CD4-positive, alpha-beta memory T cell (primary cell): ENCODE measurements at regions of chr20 and their contacts with region 1.

Region 1: GRCh38 chr20:4091490-4092479 is 76.4 kb upstream of the RNF24 start:
- DNase-seq: peak in 4 of 5 donors; percentile 18 to 28 (median 26)
- H3K4me3 ChIP-seq: no peak overlapping the region
- H3K4me3 Mint-ChIP-seq: no peak overlapping the region
- H3K27ac ChIP-seq: no peak overlapping the region
- H3K27ac Mint-ChIP-seq: no peak overlapping the region
- H3K4me1 ChIP-seq: no peaks in the 10 kb centered on the region
- H3K4me1 Mint-ChIP-seq: peaks cover 0 to 4% (median 3%) of the 10 kb centered on the region in 4 donors
- H3K27me3 ChIP-seq: no peaks in the 10 kb centered on the region
- H3K27me3 Mint-ChIP-seq: peaks cover 5 to 9% of the 10 kb centered on the region in 2 donors

Region 2: GRCh38 chr20:3679749-3680700 is 411.8 kb before region 1 on chr20:
- CTCF ChIA-PET with region 1: interaction called, 6 read pairs
- POLR2A ChIA-PET with region 1: no interaction called
- intact Hi-C with region 1: loop called (anchors 2 kb)
- DNase-seq: no peak
- H3K4me3 ChIP-seq: no peak overlapping the region
- H3K4me3 Mint-ChIP-seq: peak overlapping the region in 1 of 8 donors; percentile 31
- H3K27ac ChIP-seq: no peak overlapping the region
- H3K27ac Mint-ChIP-seq: no peak overlapping the region
- H3K4me1 ChIP-seq: no peaks in the 10 kb centered on the region
- H3K4me1 Mint-ChIP-seq: peaks cover 3 to 9% (median 7%) of the 10 kb centered on the region in 4 donors
- H3K27me3 ChIP-seq: peaks cover 7% of the 10 kb centered on the region
- H3K27me3 Mint-ChIP-seq: peaks cover 38 to 48% of the 10 kb centered on the region in 2 donors

Region 3: GRCh38 chr20:4038047-4038459 is 53.7 kb before region 1 on chr20:
- CTCF ChIA-PET with region 1: no interaction called
- POLR2A ChIA-PET with region 1: no interaction called
- intact Hi-C with region 1: no loop called
- DNase-seq: peak; percentile 82 to 96 (median 91)
- H3K4me3 ChIP-seq: peak overlapping the region in 1 of 2 donors; percentile 37
- H3K4me3 Mint-ChIP-seq: peak overlapping the region; percentile 80 to 89 (median 86)
- H3K27ac ChIP-seq: peak overlapping the region; percentile 39
- H3K27ac Mint-ChIP-seq: peak overlapping the region; percentile 74 to 99 (median 98)
- H3K4me1 ChIP-seq: peaks cover 22% of the 10 kb centered on the region
- H3K4me1 Mint-ChIP-seq: peaks cover 11 to 23% (median 18%) of the 10 kb centered on the region in 4 donors
- H3K27me3 ChIP-seq: no peaks in the 10 kb centered on the region
- H3K27me3 Mint-ChIP-seq: no peaks in the 10 kb centered on the region